K562 (cell line): ENCODE measurements at regions of chr11 and their contacts with region 1.

Region 1: DNA sequence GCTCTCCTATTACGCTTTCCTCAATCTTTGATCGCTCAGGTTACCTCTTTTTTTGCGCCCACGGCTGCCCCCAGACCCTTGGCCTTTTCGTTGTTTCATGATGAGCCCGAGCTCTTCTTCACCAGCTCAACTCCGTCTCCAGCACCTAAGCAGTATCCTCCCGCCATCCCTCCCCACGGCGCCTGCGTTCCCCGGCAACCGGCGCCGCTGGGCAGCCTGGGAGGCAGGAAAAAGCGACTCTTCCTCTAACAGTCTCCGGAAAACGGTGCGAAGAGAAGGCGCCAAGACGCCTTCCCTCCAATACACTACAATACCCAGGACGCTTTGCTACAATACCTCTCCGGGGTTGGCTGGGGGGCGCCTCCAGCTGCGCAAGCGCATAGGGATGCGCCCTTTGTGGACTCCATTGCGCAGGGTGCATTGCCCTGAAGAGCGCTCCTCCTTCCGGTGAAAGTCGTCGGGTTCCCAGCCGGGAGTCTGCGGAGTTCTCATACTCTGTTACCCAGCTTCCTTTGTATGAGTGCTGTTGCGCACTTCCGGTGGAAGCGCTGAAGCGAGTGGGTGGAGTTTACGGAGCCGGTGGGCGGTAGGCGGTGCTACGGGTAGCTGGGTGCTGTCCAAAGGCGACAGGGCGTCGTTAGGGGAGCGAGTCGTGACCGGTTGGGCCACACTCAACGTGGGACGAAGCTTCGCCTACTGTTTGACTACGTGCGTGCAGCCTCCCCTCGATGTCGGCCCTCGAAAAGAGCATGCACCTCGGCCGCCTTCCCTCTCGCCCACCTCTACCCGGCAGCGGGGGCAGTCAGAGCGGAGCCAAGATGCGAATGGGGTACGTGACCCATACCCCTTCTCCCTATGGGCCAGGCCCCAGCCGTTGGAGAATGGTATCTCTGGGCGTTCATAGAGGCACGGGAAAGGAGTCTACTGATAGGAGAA is at the starts of genes C2CD3 and PPME1:
- DNase-seq: peak; percentile 90 to 99 (median 94)
- ATAC-seq: peak; percentile 93
- H3K4me3 ChIP-seq: peak within 1 kb of the TSS; percentile 62
- H3K27ac ChIP-seq: peak within 1 kb of the TSS; percentile 89
- H3K4me1 ChIP-seq: peaks cover 3 to 17% of the 10 kb centered on the region in 2 experiments; a peak in 3 of 5 replicates
- H3K27me3 ChIP-seq: no peaks in the 10 kb centered on the region
- CTCF ChIP-seq: peak; percentile 44 to 55 (median 53); a peak in 5 of 6 replicates
- EP300 ChIP-seq: no peak; the same call in 1 of the 2 replicates
- POLR2A ChIP-seq: peak; percentile 93
- RAD21 ChIP-seq: peak in 1 of 2 experiments; percentile 9; a peak in 1 of 4 replicates
- polyA plus RNA-seq, gene C2CD3: 4.4 to 5.1 TPM
- polyA plus RNA-seq, gene PPME1: 9.8 to 24.1 TPM

Region 2: DNA sequence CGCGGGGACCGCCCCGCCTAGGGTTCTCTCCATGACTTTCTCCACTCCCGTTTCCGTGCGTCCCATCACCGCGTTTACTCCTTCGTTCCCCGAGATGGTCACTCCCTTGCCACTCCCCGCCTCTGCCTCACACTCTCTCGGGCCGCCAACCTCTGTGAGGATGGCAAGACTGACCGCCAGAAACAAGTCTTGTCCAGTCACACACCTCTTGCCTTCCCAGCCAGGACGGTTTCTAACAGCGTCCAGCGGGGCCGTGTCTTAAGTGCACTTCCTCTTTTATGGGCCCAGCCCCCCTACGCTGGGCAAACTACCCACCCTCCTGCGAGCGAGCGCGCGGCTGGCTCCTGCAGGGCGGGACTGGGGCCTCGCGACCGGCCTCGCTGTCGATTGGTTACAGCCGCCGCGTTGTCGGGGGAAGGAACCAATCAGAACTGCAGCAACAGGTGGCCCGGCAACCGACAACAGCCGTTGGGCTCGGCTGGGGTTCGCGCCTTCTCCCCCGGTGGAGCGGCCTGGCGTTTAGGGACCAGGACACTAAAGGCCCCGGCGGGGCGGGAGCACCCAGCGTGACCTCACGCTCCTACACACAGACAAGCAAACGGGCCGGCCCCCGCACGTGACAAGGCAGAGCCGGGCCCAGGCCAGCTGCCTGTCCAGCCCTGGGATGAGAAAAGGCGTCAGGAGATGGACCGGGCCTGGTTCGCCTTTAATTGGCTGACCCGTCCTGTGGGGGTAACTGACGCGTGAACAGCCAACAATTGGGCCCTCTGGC is 187.8 kb before region 1 on chr11:
- CTCF ChIA-PET with region 1: no interaction called
- POLR2A ChIA-PET with region 1: interaction called, 9 read pairs
- in situ Hi-C with region 1: no loop called
- intact Hi-C with region 1: loop called (anchors 5 kb)
- DNase-seq: peak; percentile 96 to 99 (median 98)
- ATAC-seq: peak; percentile 87
- H3K4me3 ChIP-seq: peak overlapping the region; percentile 67
- H3K27ac ChIP-seq: peak overlapping the region; percentile 99
- H3K4me1 ChIP-seq: peaks cover 41 to 53% of the 10 kb centered on the region in 2 experiments
- H3K27me3 ChIP-seq: no peaks in the 10 kb centered on the region
- CTCF ChIP-seq: peak in 1 of 3 experiments; percentile 1; a peak in 1 of 6 replicates
- EP300 ChIP-seq: peak; percentile 62
- POLR2A ChIP-seq: peak; percentile 95
- RAD21 ChIP-seq: no peak

Region 3: GRCh38 chr11:74185695-74186094 is 14.7 kb after region 1 on chr11:
- CTCF ChIA-PET with region 1: no interaction called
- POLR2A ChIA-PET with region 1: interaction called, 32 read pairs
- in situ Hi-C with region 1: no loop called
- intact Hi-C with region 1: no loop called
- DNase-seq: no peak
- ATAC-seq: peak; percentile 68
- H3K4me3 ChIP-seq: no peak overlapping the region
- H3K27ac ChIP-seq: no peak overlapping the region
- H3K4me1 ChIP-seq: peaks cover 0 to 9% of the 10 kb centered on the region in 2 experiments; a peak in 2 of 5 replicates
- H3K27me3 ChIP-seq: no peaks in the 10 kb centered on the region
- CTCF ChIP-seq: no peak
- EP300 ChIP-seq: no peak
- POLR2A ChIP-seq: no peak
- RAD21 ChIP-seq: no peak